Activated CD4-positive, alpha-beta memory T cell treated with anti-CD3 and anti-CD28 coated beads for 36 hours (primary cell): ENCODE measurements at regions of chr11 and their contacts with region 1.

Region 1: DNA sequence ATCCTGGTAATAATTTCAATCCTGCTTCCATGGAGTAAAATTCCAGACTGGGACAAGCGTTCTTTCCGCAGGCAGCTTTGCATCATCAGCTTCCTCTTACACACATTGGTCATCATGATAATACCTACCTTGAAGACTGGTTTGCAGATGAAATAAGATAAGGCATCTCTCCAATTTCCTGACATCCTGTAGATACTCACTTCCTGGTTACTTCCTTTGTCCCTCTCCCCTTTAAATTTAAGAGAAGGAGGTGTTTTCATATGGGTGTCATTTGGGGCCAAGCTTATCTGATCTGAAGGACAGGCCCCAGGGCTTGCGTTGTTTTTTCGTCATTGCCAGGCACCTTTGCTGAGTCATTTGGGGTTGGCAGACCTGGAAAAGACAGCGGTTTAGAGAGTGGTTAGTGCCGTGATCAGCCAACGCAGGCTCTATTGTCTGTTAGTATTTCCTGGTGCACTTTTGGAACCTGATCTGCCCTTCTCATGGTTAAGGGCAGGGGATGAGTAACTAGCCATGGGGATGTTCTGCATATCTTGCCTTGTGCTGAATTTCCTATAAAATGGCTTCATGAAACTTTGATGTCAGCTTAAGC is 24.1 kb downstream of the GRAMD1B start:
- DNase-seq: peak; percentile 92
- H3K4me3 Mint-ChIP-seq: peak overlapping the region; percentile 74
- H3K27ac Mint-ChIP-seq: peak overlapping the region; percentile 97
- H3K4me1 Mint-ChIP-seq: peaks cover 82% of the 10 kb centered on the region
- H3K27me3 Mint-ChIP-seq: no peaks in the 10 kb centered on the region

Region 2: GRCh38 chr11:122749005-122749687 is 705.0 kb before region 1 on chr11:
- CTCF ChIA-PET with region 1: no interaction called
- POLR2A ChIA-PET with region 1: no interaction called
- intact Hi-C with region 1: loop called (anchors 5 kb)
- DNase-seq: peak; percentile 83
- H3K4me3 Mint-ChIP-seq: no peak overlapping the region
- H3K27ac Mint-ChIP-seq: no peak overlapping the region
- H3K4me1 Mint-ChIP-seq: peaks cover 33% of the 10 kb centered on the region
- H3K27me3 Mint-ChIP-seq: no peaks in the 10 kb centered on the region

Region 3: DNA sequence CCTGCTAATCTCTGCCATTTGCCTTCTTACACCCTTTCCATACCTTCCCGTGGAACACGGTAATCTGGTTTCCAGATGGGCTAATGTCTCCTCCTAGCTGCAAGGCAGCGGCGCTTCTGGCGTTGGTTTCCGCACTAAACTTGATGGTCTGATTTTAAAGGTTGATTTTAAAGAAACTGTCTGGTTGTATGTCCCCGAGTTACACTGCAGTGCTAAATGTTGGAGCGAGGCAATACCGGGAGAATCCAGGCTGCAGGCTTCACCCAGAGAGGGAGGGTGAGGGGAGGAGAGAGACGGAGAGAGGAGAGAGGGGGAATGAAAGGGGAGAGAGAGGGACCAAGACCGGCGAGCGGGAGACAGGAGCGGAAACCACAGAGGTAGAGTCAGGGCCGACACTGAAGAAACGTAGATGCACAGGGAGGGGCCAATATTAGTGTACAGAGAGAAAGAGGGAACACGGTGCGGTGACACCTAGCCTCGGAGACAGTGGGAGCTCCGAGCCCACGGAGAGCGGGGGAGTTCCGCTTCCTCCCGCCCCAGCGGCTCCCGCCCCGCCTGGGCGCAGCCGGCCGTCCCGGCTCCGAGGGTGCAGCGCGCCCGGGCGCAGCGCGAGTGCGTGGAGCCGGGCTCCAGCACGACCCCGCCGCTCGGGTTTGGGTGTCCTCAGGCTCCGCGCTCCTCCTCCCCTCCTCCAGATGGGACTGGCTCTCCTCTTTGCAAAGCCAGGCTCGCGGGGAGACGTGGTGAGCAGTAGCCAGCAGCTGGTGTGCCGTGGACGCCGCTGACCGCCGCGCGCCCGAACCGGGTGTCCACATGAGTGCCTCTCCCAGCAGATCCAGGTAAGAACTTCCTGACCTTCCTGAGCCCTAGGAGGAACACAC is 96.0 kb before region 1 on chr11:
- CTCF ChIA-PET with region 1: interaction called, 4 read pairs
- POLR2A ChIA-PET with region 1: interaction called, 6 read pairs
- intact Hi-C with region 1: loop called (anchors 1 kb)
- DNase-seq: peak; percentile 71
- H3K4me3 Mint-ChIP-seq: peak overlapping the region; percentile 82
- H3K27ac Mint-ChIP-seq: peak overlapping the region; percentile 70
- H3K4me1 Mint-ChIP-seq: peaks cover 36% of the 10 kb centered on the region
- H3K27me3 Mint-ChIP-seq: peaks cover 27% of the 10 kb centered on the region

Region 4: DNA sequence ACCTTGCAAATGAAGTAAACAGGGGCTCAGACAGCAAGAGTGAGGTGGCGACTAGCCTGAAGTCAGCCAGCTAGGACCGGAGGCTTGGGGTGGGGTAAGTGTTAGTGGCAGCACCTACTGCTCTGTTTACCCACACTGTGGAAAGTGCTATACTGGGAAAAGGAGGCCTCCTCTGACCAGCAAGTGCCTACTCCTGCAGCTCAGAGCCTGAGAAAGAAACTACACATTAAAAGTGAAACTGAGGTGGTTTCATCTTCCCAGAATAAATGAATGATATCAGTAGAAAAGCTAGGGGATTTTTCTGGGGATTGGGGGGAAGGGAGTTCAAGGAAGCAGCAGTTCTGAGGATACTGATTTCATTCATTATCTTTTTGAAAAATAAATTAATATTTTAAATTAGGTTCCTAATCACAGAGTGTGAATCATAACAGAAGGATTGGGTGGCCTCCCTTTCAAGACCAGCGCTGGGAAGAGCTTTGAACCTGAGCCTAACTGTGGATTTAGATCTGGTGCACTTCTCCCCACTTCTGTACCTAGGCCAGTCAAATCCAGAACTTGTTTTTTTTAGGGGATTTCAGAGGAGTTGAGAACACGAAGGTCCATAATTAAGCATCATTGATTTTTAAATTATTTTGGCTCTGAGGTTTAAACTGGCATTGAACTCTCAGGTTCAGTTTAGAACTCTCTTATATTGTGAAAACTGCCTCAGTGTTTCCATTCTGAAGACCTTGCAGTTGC is 72.2 kb before region 1 on chr11:
- CTCF ChIA-PET with region 1: interaction called, 5 read pairs
- POLR2A ChIA-PET with region 1: interaction called, 11 read pairs
- intact Hi-C with region 1: loop called (anchors 1 kb)
- DNase-seq: peak; percentile 83
- H3K4me3 Mint-ChIP-seq: no peak overlapping the region
- H3K27ac Mint-ChIP-seq: no peak overlapping the region
- H3K4me1 Mint-ChIP-seq: peaks cover 22% of the 10 kb centered on the region
- H3K27me3 Mint-ChIP-seq: no peaks in the 10 kb centered on the region

Region 5: DNA sequence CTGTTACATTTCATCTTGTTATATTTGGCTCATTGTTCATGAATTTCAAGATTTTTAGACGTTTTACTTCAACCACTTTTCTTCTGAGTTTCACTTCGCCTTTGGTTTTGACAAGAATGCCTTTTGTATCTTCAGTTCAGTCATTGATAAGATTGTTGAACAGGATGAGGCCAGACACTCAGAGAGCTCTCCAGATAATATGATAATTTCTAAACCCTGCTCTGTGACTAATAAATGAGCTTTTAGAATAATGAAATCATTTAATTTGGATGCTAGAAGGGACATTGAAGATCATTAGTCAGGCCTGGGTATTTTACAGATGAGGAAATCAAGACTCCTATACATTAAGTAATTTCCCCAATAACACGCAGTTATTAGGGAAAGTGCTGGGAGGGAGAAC is 61.3 kb before region 1 on chr11:
- CTCF ChIA-PET with region 1: no interaction called
- POLR2A ChIA-PET with region 1: no interaction called
- intact Hi-C with region 1: no loop called
- DNase-seq: no peak
- H3K4me3 Mint-ChIP-seq: no peak overlapping the region
- H3K27ac Mint-ChIP-seq: no peak overlapping the region
- H3K4me1 Mint-ChIP-seq: peaks cover 13% of the 10 kb centered on the region
- H3K27me3 Mint-ChIP-seq: peaks cover 5% of the 10 kb centered on the region

Region 6: GRCh38 chr11:123429913-123430720 is 24.0 kb before region 1 on chr11 and contains the start of gene GRAMD1B:
- CTCF ChIA-PET with region 1: interaction called, 7 read pairs
- POLR2A ChIA-PET with region 1: interaction called, 3 read pairs
- intact Hi-C with region 1: loop called (anchors 1 kb)
- DNase-seq: peak; percentile 85
- H3K4me3 Mint-ChIP-seq: peak within 1 kb of the TSS; percentile 85
- H3K27ac Mint-ChIP-seq: peak within 1 kb of the TSS; percentile 90
- H3K4me1 Mint-ChIP-seq: peaks cover 40% of the 10 kb centered on the region
- H3K27me3 Mint-ChIP-seq: no peaks in the 10 kb centered on the region
- total RNA-seq, gene GRAMD1B: 36.8 to 39.0 TPM

Region 7: DNA sequence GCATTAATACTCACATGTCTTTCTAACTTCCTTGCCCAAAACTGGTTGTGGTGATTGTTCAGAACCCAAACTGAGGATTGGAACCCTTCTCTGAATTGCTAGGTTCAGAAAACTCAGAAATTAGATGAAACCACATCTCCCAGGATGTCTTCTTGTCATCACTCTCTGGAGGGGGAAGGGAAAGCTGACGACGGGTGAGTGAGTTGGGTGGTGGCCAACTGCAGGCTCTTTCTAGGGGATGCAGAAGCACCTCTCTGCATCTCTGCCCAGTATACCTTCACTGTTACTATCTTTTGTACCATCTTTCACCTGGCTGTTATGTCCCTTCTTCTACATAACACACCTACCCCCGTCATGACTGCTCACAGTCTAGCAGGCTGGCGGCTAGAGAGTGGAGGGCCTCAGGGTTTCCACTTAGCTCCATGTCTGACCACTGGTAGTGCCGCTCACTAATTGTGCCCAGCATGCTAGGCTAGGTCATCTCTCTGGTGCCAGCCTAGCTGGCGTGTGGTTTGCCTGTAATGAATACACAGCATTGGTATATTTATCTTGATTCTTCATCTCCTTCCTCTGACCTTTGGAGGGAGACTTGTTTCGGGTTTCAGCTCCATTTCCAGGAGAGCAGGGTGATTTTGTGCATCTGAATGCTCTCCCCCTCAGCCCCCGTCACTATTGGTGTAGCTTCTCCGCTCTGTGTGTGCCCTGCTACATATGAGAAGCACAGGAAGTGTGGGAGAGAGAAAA is 16.7 kb before region 1 on chr11:
- CTCF ChIA-PET with region 1: interaction called, 9 read pairs
- POLR2A ChIA-PET with region 1: interaction called, 7 read pairs
- intact Hi-C with region 1: loop called (anchors 1 kb)
- DNase-seq: peak; percentile 51
- H3K4me3 Mint-ChIP-seq: peak overlapping the region; percentile 54
- H3K27ac Mint-ChIP-seq: peak overlapping the region; percentile 83
- H3K4me1 Mint-ChIP-seq: peaks cover 80% of the 10 kb centered on the region
- H3K27me3 Mint-ChIP-seq: no peaks in the 10 kb centered on the region

Region 8: DNA sequence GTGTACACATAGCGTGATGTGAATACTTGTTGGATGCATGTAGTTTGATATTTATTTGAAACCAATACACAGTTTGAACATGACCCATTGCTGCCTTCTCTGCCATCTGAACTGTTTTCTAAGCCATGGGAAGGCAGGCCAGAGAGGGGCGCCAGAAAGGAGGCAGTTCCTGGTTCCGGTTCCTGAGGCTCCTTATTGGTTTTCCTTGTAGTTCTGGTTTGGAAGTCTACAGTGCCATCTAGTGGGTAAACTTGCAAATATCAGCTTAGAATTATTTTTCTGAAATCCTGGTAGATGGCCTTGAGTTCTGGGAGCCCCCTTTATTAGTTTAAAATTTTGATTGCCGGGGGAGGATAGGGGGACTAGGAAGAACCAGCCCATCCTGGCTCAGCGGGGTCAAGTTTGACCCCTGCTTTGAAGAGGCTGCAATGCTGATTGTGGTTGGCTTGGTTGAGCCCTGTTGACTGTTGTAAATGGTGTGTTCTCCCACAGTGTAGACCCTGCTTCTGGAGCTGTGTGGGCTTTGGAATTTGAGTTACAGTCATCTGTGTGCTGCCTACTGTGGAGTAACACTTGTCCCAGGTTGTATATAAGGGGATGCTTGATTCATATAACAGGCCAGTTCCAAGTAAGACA is 24.3 kb after region 1 on chr11:
- CTCF ChIA-PET with region 1: interaction called, 13 read pairs
- POLR2A ChIA-PET with region 1: interaction called, 5 read pairs
- intact Hi-C with region 1: loop called (anchors 1 kb)
- DNase-seq: peak; percentile 38
- H3K4me3 Mint-ChIP-seq: peak overlapping the region; percentile 27
- H3K27ac Mint-ChIP-seq: peak overlapping the region; percentile 56
- H3K4me1 Mint-ChIP-seq: peaks cover 43% of the 10 kb centered on the region
- H3K27me3 Mint-ChIP-seq: no peaks in the 10 kb centered on the region